PC-3 (cell line): ENCODE measurements at regions of chr13 and their contacts with region 1.

Region 1: DNA sequence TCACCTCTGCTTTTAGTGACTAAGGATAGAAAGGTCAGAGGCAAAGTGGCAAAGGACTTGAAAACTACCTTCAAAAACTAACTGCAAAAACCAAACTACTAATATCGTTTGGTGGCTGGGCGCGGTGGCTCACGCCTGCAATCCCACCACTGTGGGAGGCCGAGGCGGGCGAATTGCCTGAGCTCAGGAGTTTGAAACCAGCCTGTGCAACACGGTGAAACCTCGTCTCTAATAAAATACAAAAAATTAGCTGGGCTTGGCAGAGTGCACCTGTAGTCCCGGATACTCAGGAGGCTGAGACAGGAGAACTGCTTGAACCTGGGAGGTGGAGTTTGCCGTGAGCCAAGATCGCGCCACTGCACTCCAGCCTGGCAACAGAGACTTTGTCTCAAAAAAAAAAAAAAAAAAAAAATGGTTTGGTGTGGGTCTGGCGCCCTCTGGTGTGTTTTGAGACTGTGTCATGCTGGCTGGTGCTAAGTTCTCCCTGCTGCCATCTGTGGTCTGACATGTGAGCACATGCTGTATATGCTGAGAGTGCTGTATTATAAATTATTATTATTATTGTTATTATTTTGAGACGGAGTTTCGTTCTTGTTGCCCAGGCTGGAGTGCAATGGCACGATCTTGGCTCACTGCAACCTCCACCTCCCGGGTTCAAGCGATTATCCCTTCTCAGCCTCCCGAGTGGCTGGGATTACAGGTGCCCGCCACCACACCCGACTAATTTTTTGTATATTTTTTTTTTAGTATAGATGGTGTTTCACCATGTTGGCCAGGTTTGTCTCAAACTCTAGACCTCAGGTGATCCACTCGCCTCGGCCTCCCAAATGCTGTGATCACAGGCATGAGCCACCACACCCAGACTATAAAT is 36.0 kb upstream of the RNF17 start:
- DNase-seq: peak; percentile 77
- ATAC-seq: peak; percentile 98
- H3K4me3 ChIP-seq: no peak overlapping the region
- H3K27ac ChIP-seq: no peak overlapping the region
- H3K4me1 ChIP-seq: no peaks in the 10 kb centered on the region
- H3K27me3 ChIP-seq: peaks cover 24% of the 10 kb centered on the region
- CTCF ChIP-seq: peak; percentile 67

Region 2: DNA sequence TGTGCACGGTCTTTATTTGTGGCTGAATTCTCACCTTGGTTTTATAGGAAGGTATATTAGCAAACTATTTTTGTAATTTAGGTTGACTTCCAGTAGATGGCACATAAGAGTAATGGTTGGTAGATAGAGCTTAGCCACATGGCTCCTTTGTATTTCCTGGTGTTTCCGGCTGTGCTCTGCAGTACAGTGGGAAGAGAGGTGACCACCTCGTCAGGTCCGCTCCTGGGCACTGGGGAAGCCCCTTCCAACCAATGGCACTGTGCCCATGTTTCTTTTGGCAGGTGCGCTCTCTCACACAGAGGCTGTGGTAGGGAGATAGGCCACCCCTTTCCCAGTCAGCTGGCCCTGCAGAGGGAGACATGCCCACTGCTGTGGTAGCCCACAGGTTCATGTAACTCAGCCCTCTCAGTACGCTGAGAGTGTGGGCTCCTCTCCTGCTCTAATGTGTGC is 122.0 kb before region 1 on chr13:
- CTCF ChIA-PET with region 1: no interaction called
- POLR2A ChIA-PET with region 1: no interaction called
- intact Hi-C with region 1: loop called (anchors 2 kb)
- DNase-seq: peak; percentile 64
- ATAC-seq: peak; percentile 75
- H3K4me3 ChIP-seq: no peak overlapping the region
- H3K27ac ChIP-seq: no peak overlapping the region
- H3K4me1 ChIP-seq: no peaks in the 10 kb centered on the region
- H3K27me3 ChIP-seq: peaks cover 13% of the 10 kb centered on the region
- CTCF ChIP-seq: peak; percentile 55

Region 3: DNA sequence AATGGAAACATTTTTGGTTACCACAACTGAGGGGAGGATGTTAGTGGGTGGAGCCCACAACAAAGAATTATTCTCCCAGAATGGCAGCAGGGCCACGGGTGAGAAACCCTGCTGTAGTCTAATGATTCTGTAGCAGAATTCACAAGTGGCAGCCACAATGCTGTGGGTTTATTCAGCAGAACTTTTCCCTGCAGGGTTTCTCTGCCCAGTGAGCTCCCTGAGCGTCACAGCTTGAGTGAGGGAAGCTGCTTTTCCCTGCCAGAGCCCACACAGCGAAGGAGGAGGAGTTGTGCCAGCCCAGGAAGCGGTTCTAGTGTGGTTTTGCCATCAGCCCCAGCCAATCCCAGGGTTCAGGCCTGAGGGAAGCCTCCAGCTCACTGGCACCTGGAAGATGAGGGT is 43.4 kb before region 1 on chr13:
- CTCF ChIA-PET with region 1: no interaction called
- POLR2A ChIA-PET with region 1: interaction called, 31 read pairs
- intact Hi-C with region 1: no loop called
- DNase-seq: no peak
- ATAC-seq: no peak
- H3K4me3 ChIP-seq: no peak overlapping the region
- H3K27ac ChIP-seq: no peak overlapping the region
- H3K4me1 ChIP-seq: no peaks in the 10 kb centered on the region
- H3K27me3 ChIP-seq: peaks cover 26% of the 10 kb centered on the region
- CTCF ChIP-seq: no peak

Region 4: GRCh38 chr13:24693862-24694471 is 34.0 kb before region 1 on chr13:
- CTCF ChIA-PET with region 1: no interaction called
- POLR2A ChIA-PET with region 1: no interaction called
- intact Hi-C with region 1: loop called (anchors 5 kb)
- DNase-seq: peak; percentile 78
- ATAC-seq: peak; percentile 86
- H3K4me3 ChIP-seq: no peak overlapping the region
- H3K27ac ChIP-seq: no peak overlapping the region
- H3K4me1 ChIP-seq: no peaks in the 10 kb centered on the region; the same call in 1 of the 2 replicates
- H3K27me3 ChIP-seq: peaks cover 32% of the 10 kb centered on the region
- CTCF ChIP-seq: peak; percentile 84

Region 5: DNA sequence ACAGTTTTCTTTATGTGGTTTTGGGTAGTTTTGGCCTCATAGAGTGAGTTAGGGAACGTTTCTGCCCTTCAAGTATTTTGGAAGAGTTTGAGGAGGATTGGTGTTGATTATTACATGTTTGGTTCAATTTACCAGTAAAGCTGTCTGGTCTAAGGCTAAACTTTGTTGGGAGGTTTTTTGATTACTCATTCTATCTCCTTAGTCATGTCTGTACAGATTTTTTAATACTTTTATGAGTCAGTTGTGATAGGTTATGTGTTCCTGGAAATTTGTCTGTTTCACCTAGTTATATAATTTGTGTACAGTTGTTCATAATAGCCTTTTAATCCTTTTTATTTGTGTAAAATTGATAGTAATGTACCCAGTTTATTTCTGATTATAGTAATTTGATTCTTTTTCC is 56.4 kb after region 1 on chr13:
- CTCF ChIA-PET with region 1: no interaction called
- POLR2A ChIA-PET with region 1: no interaction called
- intact Hi-C with region 1: no loop called
- DNase-seq: peak; percentile 16
- ATAC-seq: no peak
- H3K4me3 ChIP-seq: no peak overlapping the region
- H3K27ac ChIP-seq: no peak overlapping the region
- H3K4me1 ChIP-seq: no peaks in the 10 kb centered on the region
- H3K27me3 ChIP-seq: peaks cover 51% of the 10 kb centered on the region
- CTCF ChIP-seq: no peak

Region 6: GRCh38 chr13:24822640-24823039 is 94.7 kb after region 1 on chr13:
- CTCF ChIA-PET with region 1: no interaction called
- POLR2A ChIA-PET with region 1: no interaction called
- intact Hi-C with region 1: no loop called
- DNase-seq: no peak
- ATAC-seq: no peak
- H3K4me3 ChIP-seq: no peak overlapping the region
- H3K27ac ChIP-seq: no peak overlapping the region
- H3K4me1 ChIP-seq: no peaks in the 10 kb centered on the region
- H3K27me3 ChIP-seq: peaks cover 54% of the 10 kb centered on the region
- CTCF ChIP-seq: no peak